CD4-positive, alpha-beta T cell (primary cell): ENCODE measurements at regions of chr19 and their contacts with region 1.

Region 1: DNA sequence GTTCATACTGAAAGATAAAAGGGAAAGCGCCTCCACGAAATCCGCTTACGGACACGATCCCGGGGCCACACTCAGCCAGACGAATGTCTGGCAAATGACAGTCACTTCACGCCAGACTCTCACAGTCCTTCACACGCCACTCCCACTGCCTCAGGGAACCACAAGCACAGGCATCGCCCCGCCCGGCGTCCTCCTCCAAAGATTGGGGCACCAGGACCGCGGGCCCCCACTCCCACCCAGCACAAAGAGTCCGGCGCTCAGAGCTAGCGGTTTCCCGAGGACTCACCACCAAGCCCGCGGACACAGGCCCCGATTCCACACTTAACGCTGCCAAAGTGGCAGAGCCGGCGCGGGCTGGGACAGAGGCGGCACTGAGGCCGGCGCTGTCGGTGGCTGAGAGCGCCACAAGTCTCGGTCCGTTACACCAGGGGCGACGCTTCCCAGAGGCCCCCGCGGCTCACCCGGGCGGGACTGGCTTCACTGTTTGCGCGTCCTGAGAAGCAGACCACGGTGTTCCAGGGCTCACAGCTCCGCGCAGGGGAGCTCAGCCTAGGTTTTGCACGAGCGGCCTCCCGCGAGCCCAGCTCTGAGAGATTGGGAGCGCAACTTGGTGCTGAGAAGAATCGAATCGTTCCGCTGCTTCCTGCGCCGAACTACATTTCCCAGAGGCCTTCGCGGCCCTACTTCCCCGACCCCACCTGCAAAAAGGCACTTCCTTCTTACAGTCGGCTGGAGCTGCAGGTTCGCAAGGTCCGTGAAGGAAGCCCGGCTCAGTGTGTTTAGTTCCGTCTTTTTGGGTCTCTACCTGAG is at the start of gene ZNF569:
- DNase-seq: peak; percentile 81 to 96 (median 86)
- ATAC-seq: peak; percentile 63
- H3K4me3 ChIP-seq: peak within 1 kb of the TSS; percentile 82
- H3K4me3 Mint-ChIP-seq: peak within 1 kb of the TSS; percentile 93
- H3K27ac ChIP-seq: peak within 1 kb of the TSS; percentile 83 to 87
- H3K27ac Mint-ChIP-seq: peak within 1 kb of the TSS; percentile 100
- H3K4me1 ChIP-seq: peaks cover 32% of the 10 kb centered on the region
- H3K4me1 Mint-ChIP-seq: peaks cover 44% of the 10 kb centered on the region
- H3K27me3 ChIP-seq: no peaks in the 10 kb centered on the region
- H3K27me3 Mint-ChIP-seq: no peaks in the 10 kb centered on the region
- CTCF ChIP-seq: no peak
- total RNA-seq, gene ZNF569: 5.0 to 5.2 TPM

Region 2: DNA sequence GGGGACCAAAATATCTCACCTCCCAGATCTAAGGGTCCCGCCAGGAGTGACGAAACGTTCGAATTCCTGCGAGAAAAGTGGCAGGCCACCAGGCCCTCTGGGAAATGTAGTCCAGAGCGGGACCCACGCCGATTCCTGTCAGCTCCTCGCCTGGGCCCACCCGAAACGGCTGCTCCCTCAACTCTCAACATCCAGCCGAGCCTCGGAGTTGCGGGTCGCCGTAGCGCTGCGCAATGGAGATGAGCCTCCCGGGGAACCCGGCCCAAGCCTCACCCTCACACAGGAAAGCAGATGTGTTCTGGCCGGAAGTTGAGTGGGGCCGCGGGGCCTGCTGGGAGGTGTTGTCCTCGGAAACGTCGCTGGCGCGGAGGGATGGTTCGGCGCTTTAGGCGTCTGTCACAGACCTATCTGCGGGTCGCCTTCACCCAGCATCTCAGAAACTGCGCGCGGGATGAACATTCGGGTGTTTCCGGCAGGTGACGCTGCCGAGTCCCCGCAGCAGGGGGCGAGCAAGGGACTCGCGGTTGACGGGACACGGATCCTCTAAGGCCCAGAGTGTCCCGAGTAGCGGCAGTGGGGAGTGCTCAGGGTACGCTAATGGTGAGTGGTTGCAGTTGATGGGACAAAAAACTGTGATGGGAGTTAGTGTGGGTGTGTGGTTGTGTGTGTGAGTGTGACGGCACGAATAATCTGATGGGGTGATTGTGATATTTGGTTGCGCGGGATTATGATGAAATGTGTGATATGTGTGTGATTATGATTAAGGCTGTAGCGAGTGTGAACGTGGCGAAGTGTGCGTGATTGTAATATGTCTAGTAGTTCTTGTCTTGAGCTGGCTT is 550.8 kb before region 1 on chr19 and contains the starts of genes ZNF568 and ZNF829:
- CTCF ChIA-PET with region 1: no interaction called
- POLR2A ChIA-PET with region 1: no interaction called
- intact Hi-C with region 1: loop called in 1 of 2 experiments (anchors 5 kb)
- DNase-seq: peak; percentile 83 to 97 (median 90)
- ATAC-seq: peak; percentile 97
- H3K4me3 ChIP-seq: peak within 1 kb of the TSS; percentile 92
- H3K4me3 Mint-ChIP-seq: peak within 1 kb of the TSS; percentile 90
- H3K27ac ChIP-seq: peak within 1 kb of the TSS; percentile 89 to 97
- H3K27ac Mint-ChIP-seq: peak within 1 kb of the TSS; percentile 88
- H3K4me1 ChIP-seq: peaks cover 19% of the 10 kb centered on the region
- H3K4me1 Mint-ChIP-seq: peaks cover 44% of the 10 kb centered on the region
- H3K27me3 ChIP-seq: no peaks in the 10 kb centered on the region
- H3K27me3 Mint-ChIP-seq: no peaks in the 10 kb centered on the region
- CTCF ChIP-seq: peak; percentile 74
- total RNA-seq, gene ZNF568: 3.0 to 4.2 TPM
- total RNA-seq, gene ZNF829: 3.8 to 4.4 TPM

Region 3: DNA sequence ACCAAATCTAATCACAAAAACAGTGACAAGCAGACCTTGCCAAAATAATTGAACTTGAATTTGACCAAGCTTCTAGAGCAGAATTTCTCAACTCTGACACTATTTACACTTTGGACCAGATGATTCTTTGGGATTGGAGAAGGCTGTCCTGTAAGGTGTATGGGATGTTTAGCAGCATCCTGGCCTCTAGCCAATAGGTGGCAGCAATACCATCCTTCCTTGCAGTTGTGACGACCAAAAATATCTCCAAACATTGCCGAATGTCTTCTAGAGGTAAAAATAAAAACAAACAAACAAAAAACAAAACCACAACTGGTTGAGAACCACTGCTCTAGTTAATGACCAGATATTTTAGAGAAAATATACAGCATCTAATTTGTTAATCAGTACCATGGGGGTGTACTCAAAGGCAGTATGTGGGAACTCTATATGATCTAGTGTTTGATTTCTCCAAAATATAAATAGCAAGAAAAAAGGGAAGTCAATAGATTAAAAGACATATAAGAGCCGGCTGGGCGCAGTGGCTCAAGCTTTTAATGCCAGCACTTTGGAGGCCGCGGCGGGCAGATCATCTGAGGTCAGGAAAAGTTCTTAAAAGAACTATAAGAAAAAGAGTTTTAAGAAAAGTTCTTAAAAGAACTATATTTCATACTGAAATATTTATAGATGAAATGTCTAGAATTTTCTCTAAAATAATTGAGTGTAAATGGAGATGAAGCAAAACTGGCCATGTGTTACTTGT is 157.0 kb before region 1 on chr19:
- CTCF ChIA-PET with region 1: no interaction called
- POLR2A ChIA-PET with region 1: no interaction called
- intact Hi-C with region 1: loop called (anchors 10 kb)
- DNase-seq: peak in 7 of 14 experiments; percentile 9 to 68 (median 44)
- ATAC-seq: no peak
- H3K4me3 ChIP-seq: no peak overlapping the region
- H3K4me3 Mint-ChIP-seq: peak overlapping the region; percentile 50
- H3K27ac ChIP-seq: no peak overlapping the region
- H3K27ac Mint-ChIP-seq: no peak overlapping the region
- H3K4me1 ChIP-seq: peaks cover 12% of the 10 kb centered on the region
- H3K4me1 Mint-ChIP-seq: peaks cover 22% of the 10 kb centered on the region
- H3K27me3 ChIP-seq: peaks cover 0 to 7% of the 10 kb centered on the region in 2 experiments
- H3K27me3 Mint-ChIP-seq: peaks cover 11% of the 10 kb centered on the region
- CTCF ChIP-seq: peak; percentile 71

Region 4: GRCh38 chr19:37370880-37371661 is 95.9 kb before region 1 on chr19 and contains the start of gene ZNF527:
- CTCF ChIA-PET with region 1: no interaction called
- POLR2A ChIA-PET with region 1: interaction called, 63 read pairs
- intact Hi-C with region 1: loop called (anchors 1 to 2 kb)
- DNase-seq: peak; percentile 93 to 98 (median 96)
- ATAC-seq: peak; percentile 96
- H3K4me3 ChIP-seq: peak within 1 kb of the TSS; percentile 59
- H3K4me3 Mint-ChIP-seq: peak within 1 kb of the TSS; percentile 96
- H3K27ac ChIP-seq: peak within 1 kb of the TSS; percentile 76 to 85
- H3K27ac Mint-ChIP-seq: peak within 1 kb of the TSS; percentile 96
- H3K4me1 ChIP-seq: peaks cover 17% of the 10 kb centered on the region
- H3K4me1 Mint-ChIP-seq: peaks cover 16% of the 10 kb centered on the region
- H3K27me3 ChIP-seq: no peaks in the 10 kb centered on the region
- H3K27me3 Mint-ChIP-seq: no peaks in the 10 kb centered on the region
- CTCF ChIP-seq: no peak
- total RNA-seq, gene ZNF527: 7.8 to 8.4 TPM

Region 5: GRCh38 chr19:37594304-37594981 is 127.4 kb after region 1 on chr19 and contains the starts of genes ZNF540 and ZNF571:
- CTCF ChIA-PET with region 1: no interaction called
- POLR2A ChIA-PET with region 1: interaction called, 75 read pairs
- intact Hi-C with region 1: loop called (anchors 1 to 2 kb)
- DNase-seq: peak; percentile 86 to 96 (median 91)
- ATAC-seq: peak; percentile 95
- H3K4me3 ChIP-seq: peak within 1 kb of the TSS; percentile 93
- H3K4me3 Mint-ChIP-seq: peak within 1 kb of the TSS; percentile 97
- H3K27ac ChIP-seq: peak within 1 kb of the TSS; percentile 94 to 97
- H3K27ac Mint-ChIP-seq: peak within 1 kb of the TSS; percentile 98
- H3K4me1 ChIP-seq: peaks cover 15% of the 10 kb centered on the region
- H3K4me1 Mint-ChIP-seq: peaks cover 39% of the 10 kb centered on the region
- H3K27me3 ChIP-seq: no peaks in the 10 kb centered on the region
- H3K27me3 Mint-ChIP-seq: no peaks in the 10 kb centered on the region
- CTCF ChIP-seq: no peak
- total RNA-seq, gene ZNF540: 11.6 to 12.0 TPM
- total RNA-seq, gene ZNF571: 6.7 to 7.0 TPM

Region 6: DNA sequence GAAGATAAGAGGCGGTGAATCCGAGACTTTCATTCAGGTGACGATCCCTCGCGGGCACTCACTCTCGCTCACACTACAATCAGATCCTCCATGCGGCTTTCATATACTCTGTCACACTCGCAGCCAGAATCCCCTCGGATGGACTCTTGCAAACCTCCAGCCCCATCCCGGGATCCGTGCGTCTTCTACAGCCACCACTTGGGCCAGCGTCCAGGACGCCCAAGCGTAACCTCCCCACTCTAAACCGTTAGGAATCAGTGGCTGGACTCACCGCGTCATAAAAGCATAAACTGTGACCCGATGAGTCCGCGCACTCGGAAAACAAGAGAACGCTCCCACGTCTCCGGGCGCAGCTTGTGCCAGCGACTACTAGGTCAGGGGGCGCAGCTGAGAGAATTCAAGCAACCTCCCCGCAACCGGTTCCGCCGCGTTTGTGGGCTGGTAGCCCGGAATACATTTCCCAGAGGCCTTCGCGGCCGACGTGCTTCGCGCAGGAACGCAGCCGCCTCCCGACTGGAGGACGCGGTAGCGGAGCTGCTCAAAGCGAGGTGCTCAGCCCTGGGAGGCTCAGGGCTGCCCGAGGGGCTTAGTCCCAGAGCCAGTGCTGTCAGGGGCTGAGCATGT is 225.0 kb after region 1 on chr19:
- CTCF ChIA-PET with region 1: no interaction called
- POLR2A ChIA-PET with region 1: interaction called, 8 read pairs
- intact Hi-C with region 1: loop called in 1 of 2 experiments (anchors 5 kb)
- DNase-seq: peak; percentile 61 to 90 (median 76)
- ATAC-seq: peak; percentile 95
- H3K4me3 ChIP-seq: peak overlapping the region; percentile 67
- H3K4me3 Mint-ChIP-seq: peak overlapping the region; percentile 96
- H3K27ac ChIP-seq: peak overlapping the region in 1 of 2 donors; percentile 32
- H3K27ac Mint-ChIP-seq: peak overlapping the region; percentile 89
- H3K4me1 ChIP-seq: peaks cover 11% of the 10 kb centered on the region
- H3K4me1 Mint-ChIP-seq: peaks cover 12% of the 10 kb centered on the region
- H3K27me3 ChIP-seq: no peaks in the 10 kb centered on the region
- H3K27me3 Mint-ChIP-seq: no peaks in the 10 kb centered on the region
- CTCF ChIP-seq: no peak